PC-3 (cell line): ENCODE measurements at regions of chr18 and their contacts with region 1.

Region 1: GRCh38 chr18:49690307-49690706 is 123.0 kb downstream of the ACAA2 start:
- DNase-seq: peak; percentile 78
- ATAC-seq: peak; percentile 74
- H3K4me3 ChIP-seq: peak overlapping the region; percentile 46; the same call in 1 of the 2 replicates
- H3K27ac ChIP-seq: peak overlapping the region; percentile 100
- H3K4me1 ChIP-seq: peaks cover 30% of the 10 kb centered on the region
- H3K27me3 ChIP-seq: no peaks in the 10 kb centered on the region
- CTCF ChIP-seq: no peak

Region 2: GRCh38 chr18:49728542-49728941 is 38.2 kb after region 1 on chr18:
- CTCF ChIA-PET with region 1: no interaction called
- POLR2A ChIA-PET with region 1: no interaction called
- intact Hi-C with region 1: loop called (anchors 2 kb)
- DNase-seq: peak; percentile 41
- ATAC-seq: no peak
- H3K4me3 ChIP-seq: no peak overlapping the region
- H3K27ac ChIP-seq: no peak overlapping the region
- H3K4me1 ChIP-seq: peaks cover 16% of the 10 kb centered on the region
- H3K27me3 ChIP-seq: no peaks in the 10 kb centered on the region
- CTCF ChIP-seq: peak; percentile 54